CD4-positive, alpha-beta memory T cell (primary cell): ENCODE measurements at regions of chr1 and their contacts with region 1.

Region 1: DNA sequence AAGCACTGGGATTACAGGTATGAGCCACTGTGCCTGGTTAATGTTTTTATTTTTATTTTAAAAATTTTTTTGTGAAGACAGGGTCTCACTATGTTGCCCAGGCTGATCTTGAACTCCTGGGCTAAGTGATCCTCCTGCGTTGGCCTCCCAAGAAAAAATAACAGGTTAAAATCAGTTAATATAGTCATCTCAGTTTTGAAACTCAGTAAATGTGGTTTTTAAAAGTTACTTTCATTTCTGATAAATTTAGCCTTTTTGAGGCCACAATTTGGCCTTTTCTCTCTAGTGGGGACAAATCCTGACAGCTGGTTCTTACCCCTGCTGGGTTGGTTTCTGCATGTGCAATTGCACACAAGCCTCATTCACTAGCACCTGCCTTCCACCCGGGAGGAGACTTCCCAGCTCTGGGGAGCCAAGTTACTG is 13.3 kb downstream of the PMF1 start:
- DNase-seq: no peak
- H3K4me3 ChIP-seq: no peak overlapping the region
- H3K4me3 Mint-ChIP-seq: no peak overlapping the region
- H3K27ac ChIP-seq: no peak overlapping the region
- H3K27ac Mint-ChIP-seq: peak overlapping the region in 3 of 7 donors; percentile 68 to 79 (median 78)
- H3K4me1 ChIP-seq: peaks cover 6% of the 10 kb centered on the region
- H3K4me1 Mint-ChIP-seq: peaks cover 22 to 39% (median 29%) of the 10 kb centered on the region in 4 donors
- H3K27me3 ChIP-seq: no peaks in the 10 kb centered on the region
- H3K27me3 Mint-ChIP-seq: no peaks in the 10 kb centered on the region

Region 2: DNA sequence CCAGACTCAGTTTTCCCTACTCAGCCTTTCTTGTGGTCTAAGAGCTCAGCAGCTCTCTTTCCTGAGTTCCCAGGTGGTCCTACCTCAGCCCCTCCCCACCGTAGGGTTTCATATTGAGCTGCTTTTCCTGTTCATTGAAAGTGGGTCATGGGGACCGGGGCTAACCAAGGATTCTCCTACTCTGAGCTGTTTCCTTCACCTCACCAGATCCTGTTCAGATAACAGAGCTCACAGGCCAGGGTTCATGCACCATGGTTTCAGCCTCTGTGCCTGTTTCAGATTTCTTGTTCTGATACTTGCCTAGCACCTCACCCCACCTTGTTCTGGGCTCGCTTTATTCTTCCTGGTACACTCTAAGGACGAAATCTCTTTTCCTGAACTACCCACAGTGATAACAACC is 181.1 kb before region 1 on chr1:
- CTCF ChIA-PET with region 1: no interaction called
- POLR2A ChIA-PET with region 1: no interaction called
- intact Hi-C with region 1: no loop called
- DNase-seq: peak in 2 of 5 donors; percentile 10 to 13
- H3K4me3 ChIP-seq: no peak overlapping the region
- H3K4me3 Mint-ChIP-seq: peak overlapping the region in 6 of 8 donors; percentile 5 to 62 (median 42)
- H3K27ac ChIP-seq: no peak overlapping the region
- H3K27ac Mint-ChIP-seq: peak overlapping the region in 6 of 7 donors; percentile 40 to 86 (median 77)
- H3K4me1 ChIP-seq: peaks cover 11% of the 10 kb centered on the region
- H3K4me1 Mint-ChIP-seq: peaks cover 12 to 20% (median 15%) of the 10 kb centered on the region in 4 donors
- H3K27me3 ChIP-seq: no peaks in the 10 kb centered on the region
- H3K27me3 Mint-ChIP-seq: no peaks in the 10 kb centered on the region

Region 3: DNA sequence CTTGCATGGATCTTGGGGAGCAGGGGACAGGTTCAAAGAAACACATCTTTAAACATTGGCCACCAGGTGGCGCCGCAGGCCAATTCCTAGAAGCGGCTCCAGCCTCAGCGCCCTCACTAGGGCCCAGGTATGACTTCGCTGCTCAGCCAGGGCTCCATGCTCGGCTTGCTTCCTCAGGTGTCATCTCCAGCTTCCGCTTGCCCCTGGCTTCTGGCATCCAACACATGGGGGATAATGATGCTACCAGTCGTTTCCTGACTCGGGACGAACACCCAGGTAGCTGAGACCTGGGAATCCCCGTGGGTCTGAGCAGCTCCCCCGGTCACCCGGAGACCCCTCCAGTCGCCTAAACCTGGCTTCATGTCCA is 135.3 kb before region 1 on chr1:
- CTCF ChIA-PET with region 1: interaction called, 121 read pairs
- POLR2A ChIA-PET with region 1: interaction called, 3 read pairs
- intact Hi-C with region 1: loop called (anchors 1 kb)
- DNase-seq: peak; percentile 78 to 84 (median 81)
- H3K4me3 ChIP-seq: no peak overlapping the region
- H3K4me3 Mint-ChIP-seq: peak overlapping the region in 1 of 8 donors; percentile 16
- H3K27ac ChIP-seq: no peak overlapping the region
- H3K27ac Mint-ChIP-seq: peak overlapping the region in 5 of 7 donors; percentile 11 to 79 (median 61)
- H3K4me1 ChIP-seq: peaks cover 6% of the 10 kb centered on the region
- H3K4me1 Mint-ChIP-seq: peaks cover 6 to 18% (median 12%) of the 10 kb centered on the region in 4 donors
- H3K27me3 ChIP-seq: no peaks in the 10 kb centered on the region
- H3K27me3 Mint-ChIP-seq: peaks cover 6 to 7% of the 10 kb centered on the region in 2 donors

Region 4: DNA sequence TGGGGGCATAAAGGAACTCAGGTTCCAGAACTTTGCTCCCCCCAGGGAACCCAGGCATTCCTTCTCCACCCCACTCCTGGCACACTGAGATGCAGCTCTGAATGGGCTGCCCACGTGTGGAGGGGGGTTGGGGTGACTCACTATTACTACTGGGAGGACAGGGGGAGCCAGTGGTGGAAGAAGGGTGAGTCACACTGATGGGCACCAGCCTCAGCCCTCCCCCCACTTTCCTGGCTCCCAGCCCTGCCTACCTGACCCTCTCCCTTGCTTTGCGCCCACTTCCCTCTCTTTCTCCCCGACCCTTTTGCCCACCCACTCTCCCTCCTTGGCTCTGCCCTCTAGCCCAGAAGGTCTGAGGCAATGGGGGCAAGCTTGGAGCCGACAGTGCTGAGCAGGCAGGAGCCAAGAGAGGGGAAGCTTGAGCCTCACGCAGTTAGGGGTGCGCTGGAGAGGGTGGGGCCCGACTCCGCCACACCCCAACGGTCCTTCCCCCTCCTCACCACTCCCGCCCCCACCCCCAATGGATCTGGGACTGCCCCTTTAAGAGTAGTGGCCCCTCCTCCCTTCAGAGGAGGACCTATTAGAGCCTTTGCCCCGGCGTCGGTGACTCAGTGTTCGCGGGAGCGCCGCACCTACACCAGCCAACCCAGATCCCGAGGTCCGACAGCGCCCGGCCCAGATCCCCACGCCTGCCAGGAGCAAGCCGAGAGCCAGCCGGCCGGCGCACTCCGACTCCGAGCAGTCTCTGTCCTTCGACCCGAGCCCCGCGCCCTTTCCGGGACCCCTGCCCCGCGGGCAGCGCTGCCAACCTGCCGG is 111.8 kb before region 1 on chr1 and contains the start of gene LMNA:
- CTCF ChIA-PET with region 1: no interaction called
- POLR2A ChIA-PET with region 1: no interaction called
- intact Hi-C with region 1: no loop called
- DNase-seq: peak; percentile 73 to 96 (median 74)
- H3K4me3 ChIP-seq: peak within 1 kb of the TSS; percentile 81
- H3K4me3 Mint-ChIP-seq: peak within 1 kb of the TSS; percentile 94 to 98 (median 96)
- H3K27ac ChIP-seq: peak within 1 kb of the TSS; percentile 91
- H3K27ac Mint-ChIP-seq: peak within 1 kb of the TSS; percentile 95 to 99 (median 98)
- H3K4me1 ChIP-seq: peaks cover 41% of the 10 kb centered on the region
- H3K4me1 Mint-ChIP-seq: peaks cover 12 to 49% (median 27%) of the 10 kb centered on the region in 4 donors
- H3K27me3 ChIP-seq: no peaks in the 10 kb centered on the region
- H3K27me3 Mint-ChIP-seq: no peaks in the 10 kb centered on the region
- total RNA-seq, gene LMNA: 29.7 to 33.8 TPM

Region 5: DNA sequence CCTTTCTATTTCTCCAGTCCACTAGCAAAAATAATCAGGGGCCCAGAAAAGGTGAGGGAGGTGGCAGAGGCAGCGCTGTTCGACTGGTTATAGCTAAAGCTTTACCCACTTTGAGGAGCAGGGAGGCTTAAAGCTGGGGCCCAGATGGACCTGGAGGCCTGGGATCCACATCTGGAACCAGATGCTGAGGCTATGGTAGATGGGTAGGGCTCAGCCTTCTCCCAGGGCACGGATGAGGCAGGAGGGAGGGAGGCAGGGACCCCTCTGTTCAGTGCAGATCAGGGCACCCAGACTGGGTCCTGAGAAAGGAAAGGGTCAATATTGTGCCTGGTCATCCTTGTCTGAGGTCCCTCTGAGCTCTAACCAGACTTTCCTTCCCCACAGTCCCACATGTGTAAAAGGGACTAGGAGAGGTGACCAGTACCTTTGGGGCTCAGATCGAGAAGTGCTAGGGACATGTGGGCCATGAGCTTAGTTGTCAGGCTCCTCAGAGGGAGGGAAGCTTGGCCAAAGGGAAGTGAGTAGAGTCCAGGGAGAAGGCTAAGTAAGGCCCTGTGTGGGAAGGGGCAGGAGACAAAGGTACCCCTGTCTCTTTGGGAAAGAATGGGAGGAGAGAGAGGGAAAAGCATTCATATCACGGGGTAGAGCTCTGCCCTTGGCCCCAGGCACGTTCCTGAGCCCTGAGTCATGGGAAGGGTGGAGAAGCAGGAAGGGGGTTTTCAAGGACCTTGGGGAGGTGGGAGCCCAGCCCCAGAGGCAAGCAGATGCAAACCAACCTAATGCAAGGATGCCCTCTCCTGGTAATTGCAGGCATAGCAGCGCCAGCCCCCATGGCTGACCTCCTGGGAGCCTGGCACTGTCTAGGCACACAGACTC is 96.2 kb before region 1 on chr1:
- CTCF ChIA-PET with region 1: interaction called, 25 read pairs
- POLR2A ChIA-PET with region 1: no interaction called
- intact Hi-C with region 1: no loop called
- DNase-seq: peak; percentile 62 to 78 (median 69)
- H3K4me3 ChIP-seq: no peak overlapping the region
- H3K4me3 Mint-ChIP-seq: peak overlapping the region in 4 of 8 donors; percentile 18 to 57 (median 46)
- H3K27ac ChIP-seq: no peak overlapping the region
- H3K27ac Mint-ChIP-seq: peak overlapping the region; percentile 71 to 97 (median 91)
- H3K4me1 ChIP-seq: peaks cover 51% of the 10 kb centered on the region
- H3K4me1 Mint-ChIP-seq: peaks cover 26 to 55% (median 46%) of the 10 kb centered on the region in 4 donors
- H3K27me3 ChIP-seq: no peaks in the 10 kb centered on the region
- H3K27me3 Mint-ChIP-seq: no peaks in the 10 kb centered on the region

Region 6: DNA sequence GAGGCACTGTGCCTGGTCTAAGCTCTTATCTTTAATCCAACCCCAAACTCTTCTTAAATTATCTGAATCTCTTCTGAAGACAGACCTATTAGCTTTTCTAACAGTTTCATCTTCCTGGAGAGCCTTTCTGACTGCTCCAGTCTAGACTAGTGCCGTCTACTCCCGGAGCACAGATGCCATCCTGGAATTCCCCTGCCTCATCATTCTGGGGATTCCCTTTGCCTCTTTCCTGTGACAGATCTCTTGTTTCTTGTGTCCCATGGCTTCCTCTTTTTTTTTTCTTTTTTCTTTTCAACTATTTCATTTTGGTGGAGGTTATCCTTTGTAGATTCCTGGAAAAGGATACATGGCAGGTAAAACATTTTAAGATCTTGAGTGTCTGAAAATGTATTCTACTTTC is 61.0 kb before region 1 on chr1:
- CTCF ChIA-PET with region 1: interaction called, 13 read pairs
- POLR2A ChIA-PET with region 1: no interaction called
- intact Hi-C with region 1: no loop called
- DNase-seq: no peak
- H3K4me3 ChIP-seq: no peak overlapping the region
- H3K4me3 Mint-ChIP-seq: no peak overlapping the region
- H3K27ac ChIP-seq: no peak overlapping the region
- H3K27ac Mint-ChIP-seq: peak overlapping the region in 2 of 7 donors; percentile 9 to 61
- H3K4me1 ChIP-seq: peaks cover 8% of the 10 kb centered on the region
- H3K4me1 Mint-ChIP-seq: peaks cover 4 to 18% (median 8%) of the 10 kb centered on the region in 4 donors
- H3K27me3 ChIP-seq: no peaks in the 10 kb centered on the region
- H3K27me3 Mint-ChIP-seq: peaks cover 0 to 2% of the 10 kb centered on the region in 2 donors

Region 7: GRCh38 chr1:156212833-156213643 is 13.1 kb before region 1 on chr1 and contains the start of gene PMF1:
- CTCF ChIA-PET with region 1: interaction called, 65 read pairs
- POLR2A ChIA-PET with region 1: interaction called, 17 read pairs
- intact Hi-C with region 1: no loop called
- DNase-seq: peak; percentile 94 to 98 (median 95)
- H3K4me3 ChIP-seq: peak within 1 kb of the TSS; percentile 83 to 93
- H3K4me3 Mint-ChIP-seq: peak within 1 kb of the TSS; percentile 93 to 99 (median 96)
- H3K27ac ChIP-seq: peak within 1 kb of the TSS; percentile 98
- H3K27ac Mint-ChIP-seq: peak within 1 kb of the TSS; percentile 97 to 100 (median 99)
- H3K4me1 ChIP-seq: peaks cover 29% of the 10 kb centered on the region
- H3K4me1 Mint-ChIP-seq: peaks cover 15 to 43% (median 31%) of the 10 kb centered on the region in 4 donors
- H3K27me3 ChIP-seq: no peaks in the 10 kb centered on the region
- H3K27me3 Mint-ChIP-seq: no peaks in the 10 kb centered on the region
- total RNA-seq, gene PMF1: 39.0 to 40.2 TPM

Region 8: GRCh38 chr1:156336242-156336641 is 110.1 kb after region 1 on chr1:
- CTCF ChIA-PET with region 1: no interaction called
- POLR2A ChIA-PET with region 1: no interaction called
- intact Hi-C with region 1: no loop called
- DNase-seq: no peak
- H3K4me3 ChIP-seq: no peak overlapping the region
- H3K4me3 Mint-ChIP-seq: peak overlapping the region; percentile 94 to 99 (median 98)
- H3K27ac ChIP-seq: no peak overlapping the region
- H3K27ac Mint-ChIP-seq: peak overlapping the region in 4 of 7 donors; percentile 50 to 91 (median 86)
- H3K4me1 ChIP-seq: peaks cover 28% of the 10 kb centered on the region
- H3K4me1 Mint-ChIP-seq: peaks cover 22 to 46% (median 35%) of the 10 kb centered on the region in 4 donors
- H3K27me3 ChIP-seq: no peaks in the 10 kb centered on the region
- H3K27me3 Mint-ChIP-seq: no peaks in the 10 kb centered on the region